Activated naive CD8-positive, alpha-beta T cell treated with anti-CD3 and anti-CD28 coated beads, Interleukin-2, amount 10 ng/mL, durations not matched to agents 7 days and 5 days (primary cell): ENCODE measurements at regions of chr4 and their contacts with region 1.

Region 1: DNA sequence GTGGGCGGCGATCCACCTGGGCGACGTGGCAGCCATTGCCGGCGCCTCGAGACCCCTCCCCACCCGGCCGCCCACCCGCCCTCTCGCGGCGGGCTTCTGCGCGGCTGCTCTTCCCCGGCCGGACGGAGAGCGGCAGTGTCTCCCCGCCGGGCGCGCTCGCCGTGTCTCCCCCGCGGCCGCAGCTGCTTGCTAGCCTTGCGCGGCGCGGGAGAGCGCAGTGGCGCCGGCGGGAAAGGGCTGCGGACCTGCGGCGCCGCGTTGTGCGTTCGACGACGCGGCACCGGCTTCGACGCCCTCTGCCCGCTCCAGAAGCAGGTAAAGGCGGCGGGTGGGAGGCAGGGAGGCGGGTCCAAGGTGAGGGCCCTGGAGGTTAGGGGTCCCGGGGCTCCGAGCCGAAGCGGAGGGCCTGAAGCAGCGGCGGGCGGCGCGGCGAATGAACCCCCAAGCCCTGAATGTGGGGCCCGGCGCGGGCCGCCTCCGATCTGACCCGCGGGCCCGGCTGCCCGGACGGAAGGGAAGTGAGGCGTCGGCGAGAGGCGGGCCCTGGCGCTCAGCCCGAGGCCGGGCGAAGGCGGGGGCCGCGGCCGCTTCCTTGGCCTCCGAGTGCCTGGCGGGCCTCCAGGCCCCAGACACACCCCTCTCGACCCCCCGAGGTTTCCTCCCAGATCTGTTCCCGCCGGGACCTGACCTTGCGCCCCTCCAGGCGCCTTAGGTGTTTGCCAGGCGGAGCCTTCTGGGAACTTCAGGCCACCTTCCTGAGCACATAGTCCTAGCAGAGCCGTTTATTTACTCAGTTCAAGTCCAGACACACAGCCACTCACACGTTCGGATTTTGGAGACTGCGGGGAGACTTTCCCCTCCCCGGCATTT is at the start of gene N4BP2:
- DNase-seq: peak; percentile 86
- ATAC-seq: peak; percentile 51
- H3K4me3 Mint-ChIP-seq: peak within 1 kb of the TSS; percentile 95
- H3K27ac Mint-ChIP-seq: peak within 1 kb of the TSS; percentile 96
- H3K4me1 Mint-ChIP-seq: peaks cover 26% of the 10 kb centered on the region
- H3K27me3 Mint-ChIP-seq: peaks cover 5% of the 10 kb centered on the region
- total RNA-seq, gene N4BP2: 31.9 to 33.5 TPM

Region 2: GRCh38 chr4:40205259-40206198 is 148.6 kb after region 1 on chr4:
- POLR2A ChIA-PET with region 1: interaction called, 134 read pairs
- DNase-seq: no peak
- ATAC-seq: peak; percentile 42
- H3K4me3 Mint-ChIP-seq: peak overlapping the region; percentile 93
- H3K27ac Mint-ChIP-seq: peak overlapping the region; percentile 97
- H3K4me1 Mint-ChIP-seq: peaks cover 52% of the 10 kb centered on the region
- H3K27me3 Mint-ChIP-seq: no peaks in the 10 kb centered on the region

Region 3: GRCh38 chr4:40309250-40309774 is 252.4 kb after region 1 on chr4:
- POLR2A ChIA-PET with region 1: interaction called, 40 read pairs
- DNase-seq: peak; percentile 92
- ATAC-seq: peak; percentile 61
- H3K4me3 Mint-ChIP-seq: peak overlapping the region; percentile 83
- H3K27ac Mint-ChIP-seq: peak overlapping the region; percentile 94
- H3K4me1 Mint-ChIP-seq: peaks cover 74% of the 10 kb centered on the region
- H3K27me3 Mint-ChIP-seq: no peaks in the 10 kb centered on the region

Region 4: GRCh38 chr4:40325189-40326019 is 268.5 kb after region 1 on chr4:
- POLR2A ChIA-PET with region 1: interaction called, 13 read pairs
- DNase-seq: no peak
- ATAC-seq: peak; percentile 97
- H3K4me3 Mint-ChIP-seq: peak overlapping the region; percentile 7
- H3K27ac Mint-ChIP-seq: peak overlapping the region; percentile 6
- H3K4me1 Mint-ChIP-seq: peaks cover 31% of the 10 kb centered on the region
- H3K27me3 Mint-ChIP-seq: no peaks in the 10 kb centered on the region